Heart left ventricle (tissue), 16 donors: ENCODE measurements at regions of chr9 and their contacts with region 1.

Region 1: DNA sequence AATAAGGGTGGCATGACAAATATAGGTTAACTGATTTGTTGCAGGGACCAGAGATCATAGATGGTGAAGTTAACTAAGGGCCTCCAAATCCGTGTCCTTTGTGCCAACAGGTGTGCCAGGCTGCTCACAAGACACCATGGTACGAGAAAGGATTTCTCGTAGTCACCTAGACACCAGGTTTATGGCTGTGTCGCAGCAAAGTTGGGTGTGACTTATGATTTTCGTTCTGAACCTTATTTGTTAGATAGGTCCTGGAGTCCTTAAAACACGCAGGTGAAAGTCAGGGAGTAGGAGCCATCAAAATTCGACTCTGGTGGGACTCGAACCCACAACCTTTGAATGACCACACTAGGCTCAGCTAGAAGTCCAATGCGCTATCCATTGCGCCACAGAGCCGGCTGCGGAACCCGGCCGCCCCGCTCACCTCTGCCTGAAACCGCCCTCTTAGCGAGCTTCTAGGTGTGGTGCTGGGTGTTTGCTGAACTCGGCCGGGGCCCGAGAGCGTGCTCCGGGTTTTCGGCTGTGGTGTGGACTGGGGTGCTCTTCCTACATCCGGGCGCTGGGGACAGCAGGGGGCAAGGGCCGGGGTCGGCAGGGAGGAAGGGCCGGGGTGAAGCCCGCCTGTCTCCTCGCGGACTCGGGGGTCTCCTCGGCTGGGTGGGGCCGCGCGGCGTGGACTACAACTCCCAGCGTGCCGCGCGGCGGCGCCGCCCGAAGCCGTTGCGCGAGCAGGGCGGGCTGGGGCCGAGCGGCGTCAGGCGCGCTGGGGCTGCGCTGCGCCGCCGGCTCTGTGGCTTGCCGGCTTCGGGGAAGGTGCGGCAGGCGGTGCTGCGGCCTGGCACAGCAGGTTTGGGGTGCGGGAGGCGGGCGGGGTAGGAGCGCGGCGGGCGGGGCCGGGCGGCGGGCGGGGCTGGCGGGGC is at the start of gene SLC27A4:
- DNase-seq: peak; percentile 67 to 89 (median 78)
- ATAC-seq: peak; percentile 61 to 94 (median 91)
- H3K4me3 ChIP-seq: peak within 1 kb of the TSS; percentile 62 to 96 (median 86)
- H3K27ac ChIP-seq: peak within 1 kb of the TSS in 11 of 12 donors; percentile 39 to 84 (median 79)
- H3K4me1 ChIP-seq: peaks cover 0 to 16% (median 9%) of the 10 kb centered on the region in 12 donors
- H3K27me3 ChIP-seq: no peaks in the 10 kb centered on the region
- CTCF ChIP-seq: no peak
- POLR2A ChIP-seq: peak in 1 of 2 donors; percentile 62
- total RNA-seq, gene SLC27A4: 10.7 to 36.1 (median 17.8) TPM

Region 2: GRCh38 chr9:128191406-128192046 is 148.5 kb before region 1 on chr9 and contains the start of gene CIZ1:
- intact Hi-C with region 1: loop called in 1 of 10 experiments (anchors 10 kb)
- DNase-seq: peak; percentile 79 to 91 (median 84)
- ATAC-seq: peak; percentile 59 to 94 (median 90)
- H3K4me3 ChIP-seq: peak within 1 kb of the TSS; percentile 72 to 98 (median 90)
- H3K27ac ChIP-seq: peak within 1 kb of the TSS; percentile 62 to 93 (median 90)
- H3K4me1 ChIP-seq: peaks cover 7 to 31% (median 18%) of the 10 kb centered on the region in 12 donors
- H3K27me3 ChIP-seq: no peaks in the 10 kb centered on the region
- CTCF ChIP-seq: peak; percentile 54 to 98 (median 84)
- POLR2A ChIP-seq: peak in 1 of 2 donors; percentile 57
- total RNA-seq, gene CIZ1: 42.6 to 101 (median 79.3) TPM

Region 3: DNA sequence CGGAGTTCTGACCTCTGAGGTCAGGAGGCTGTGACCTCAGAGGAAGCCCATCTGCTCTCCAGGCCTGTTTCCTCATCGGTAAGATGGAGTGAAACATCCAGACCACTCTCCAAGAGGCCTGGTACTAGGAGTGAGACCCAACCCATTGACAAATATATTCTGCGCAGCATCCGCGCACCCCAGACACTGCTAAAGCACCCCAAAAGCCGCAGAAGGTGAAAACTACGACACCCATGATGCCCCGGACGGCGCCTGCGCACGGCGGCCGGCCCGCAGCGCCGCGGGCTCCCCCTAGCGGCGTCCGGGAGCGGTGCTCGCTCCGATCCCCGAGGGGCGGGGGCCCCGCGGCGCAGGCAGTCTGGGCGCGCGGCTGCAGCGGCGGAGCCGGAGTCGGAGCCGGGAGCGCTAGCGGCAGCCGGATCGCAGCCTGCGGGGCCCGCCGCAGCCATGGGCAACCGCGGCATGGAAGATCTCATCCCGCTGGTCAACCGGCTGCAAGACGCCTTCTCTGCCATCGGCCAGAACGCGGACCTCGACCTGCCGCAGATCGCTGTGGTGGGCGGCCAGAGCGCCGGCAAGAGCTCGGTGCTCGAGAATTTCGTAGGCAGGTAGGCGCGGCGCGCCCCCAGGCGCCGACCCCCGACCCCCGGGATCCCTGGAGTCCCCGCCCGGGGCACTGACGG is 136.9 kb before region 1 on chr9 and contains the start of gene DNM1:
- intact Hi-C with region 1: loop called in 2 of 10 experiments (anchors 10 kb)
- DNase-seq: peak in 4 of 5 donors; percentile 60 to 83 (median 72)
- ATAC-seq: peak; percentile 26 to 91 (median 80)
- H3K4me3 ChIP-seq: peak within 1 kb of the TSS; percentile 50 to 84 (median 69)
- H3K27ac ChIP-seq: peak within 1 kb of the TSS in 7 of 12 donors; percentile 28 to 62 (median 53)
- H3K4me1 ChIP-seq: peaks cover 0 to 19% (median 8%) of the 10 kb centered on the region in 12 donors
- H3K27me3 ChIP-seq: peaks cover 0 to 14% (median 6%) of the 10 kb centered on the region in 9 donors
- CTCF ChIP-seq: peak; percentile 52 to 100 (median 92)
- POLR2A ChIP-seq: peak in 1 of 2 donors; percentile 38
- total RNA-seq, gene DNM1: 1.6 to 17.2 (median 3.6) TPM

Region 4: GRCh38 chr9:128296337-128297220 is 43.5 kb before region 1 on chr9:
- intact Hi-C with region 1: loop called in 7 of 10 experiments (anchors 1 to 10 kb)
- DNase-seq: no peak
- ATAC-seq: no peak
- H3K4me3 ChIP-seq: no peak overlapping the region
- H3K27ac ChIP-seq: no peak overlapping the region
- H3K4me1 ChIP-seq: peaks cover 0 to 6% (median 0%) of the 10 kb centered on the region in 12 donors
- H3K27me3 ChIP-seq: no peaks in the 10 kb centered on the region
- CTCF ChIP-seq: no peak
- POLR2A ChIP-seq: no peak

Region 5: DNA sequence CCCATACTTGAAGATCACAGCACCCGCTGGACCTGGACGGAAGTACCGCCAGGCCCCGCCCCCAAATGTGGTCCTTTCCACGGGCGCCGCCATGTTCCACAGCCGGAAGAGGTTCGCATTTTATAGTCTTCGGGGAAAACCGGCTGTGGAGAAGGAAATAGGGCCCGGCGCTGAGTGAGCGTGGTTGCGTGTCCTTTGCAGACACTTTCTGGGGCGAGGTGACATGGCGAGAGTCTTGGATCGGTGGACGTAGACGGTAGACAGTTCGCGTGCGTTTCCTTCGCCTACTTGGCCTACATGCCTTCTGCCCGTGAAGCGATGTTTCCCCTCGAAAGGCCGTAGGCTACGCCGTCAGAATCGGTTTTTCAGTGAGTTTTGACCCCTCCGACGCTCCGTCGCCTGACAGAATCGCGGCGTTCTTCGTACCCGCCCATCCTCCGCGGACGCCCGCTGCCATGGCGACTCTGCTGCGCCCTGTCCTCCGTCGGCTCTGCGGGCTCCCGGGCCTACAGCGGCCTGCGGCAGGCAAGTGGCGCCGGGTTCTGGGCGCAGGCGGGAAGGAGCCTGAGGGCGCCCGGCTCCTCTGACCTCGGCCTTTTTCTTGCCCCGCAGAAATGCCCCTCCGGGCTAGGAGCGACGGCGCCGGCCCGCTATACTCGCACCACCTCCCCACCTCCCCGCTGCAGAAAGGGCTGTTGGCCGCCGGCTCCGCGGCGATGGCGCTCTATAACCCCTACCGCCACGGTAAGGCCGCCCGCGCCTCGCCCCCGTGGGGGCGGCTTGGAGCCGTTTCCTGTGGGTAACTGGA is 17.4 kb before region 1 on chr9 and contains the starts of genes COQ4 and TRUB2:
- intact Hi-C with region 1: loop called in 1 of 10 experiments (anchors 2 kb)
- DNase-seq: peak; percentile 94 to 95 (median 94)
- ATAC-seq: peak; percentile 98 to 99 (median 98)
- H3K4me3 ChIP-seq: peak within 1 kb of the TSS; percentile 62 to 98 (median 92)
- H3K27ac ChIP-seq: peak within 1 kb of the TSS; percentile 84 to 98 (median 94)
- H3K4me1 ChIP-seq: peaks cover 6 to 41% (median 29%) of the 10 kb centered on the region in 12 donors
- H3K27me3 ChIP-seq: no peaks in the 10 kb centered on the region
- CTCF ChIP-seq: no peak
- POLR2A ChIP-seq: peak in 1 of 2 donors; percentile 40
- total RNA-seq, gene COQ4: 19.0 to 43.2 (median 29.8) TPM
- total RNA-seq, gene TRUB2: 12.9 to 49.7 (median 34.5) TPM